Heart right ventricle (tissue), 16 donors: ENCODE measurements at regions of chr1 and their contacts with region 1.

Region 1: DNA sequence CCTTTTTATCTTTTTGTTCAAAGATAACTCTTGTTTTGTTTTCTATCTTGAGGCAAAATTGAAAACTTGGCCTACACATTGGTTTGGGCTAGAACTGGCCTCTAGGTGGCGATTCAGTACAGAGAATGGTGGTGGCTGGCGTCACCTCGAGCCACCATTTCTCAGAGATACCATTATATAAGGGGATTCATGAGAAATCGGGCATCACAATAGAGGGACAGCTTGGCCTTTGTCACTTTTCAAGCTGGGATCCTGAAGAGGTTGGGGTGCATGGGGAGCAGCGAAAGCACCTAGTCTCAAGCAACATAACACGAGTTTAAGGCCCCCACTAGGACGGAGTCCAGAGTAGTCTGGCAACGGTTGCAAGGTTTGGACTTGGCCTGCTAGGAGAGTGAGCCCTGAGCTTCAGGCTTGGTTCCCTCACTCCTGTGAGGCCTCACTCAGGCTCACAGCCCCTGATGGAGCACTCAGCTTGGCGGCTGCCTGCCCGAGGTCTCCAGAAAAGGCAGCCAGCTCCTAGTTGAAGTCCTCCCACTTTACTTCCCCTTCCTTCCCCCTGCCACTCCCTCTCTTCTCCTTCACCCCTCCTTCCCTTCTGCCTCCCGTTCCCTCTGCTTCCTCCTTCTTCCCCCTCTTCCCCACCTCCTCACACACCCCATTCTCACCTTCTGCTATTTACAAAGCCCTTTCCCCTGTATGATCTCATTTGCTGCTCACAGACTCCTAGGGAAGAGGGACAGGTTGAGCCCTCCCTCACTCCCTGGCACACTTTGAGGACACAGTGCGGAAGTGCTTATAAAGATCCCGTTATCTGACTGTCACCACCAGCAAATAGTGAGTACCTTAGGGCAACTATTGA is 67.8 kb downstream of the LRIG2 start:
- DNase-seq: peak; percentile 32 to 66
- ATAC-seq: peak; percentile 77 to 92 (median 90)
- H3K4me3 ChIP-seq: peak overlapping the region in 4 of 10 donors; percentile 2 to 24 (median 12)
- H3K27ac ChIP-seq: peak overlapping the region in 6 of 10 donors; percentile 6 to 68 (median 54)
- H3K4me1 ChIP-seq: peaks cover 7 to 37% (median 30%) of the 10 kb centered on the region in 9 donors
- H3K27me3 ChIP-seq: no peaks in the 10 kb centered on the region
- CTCF ChIP-seq: peak; percentile 68 to 91 (median 84)

Region 2: GRCh38 chr1:113389953-113390834 is 249.4 kb after region 1 on chr1 and contains the start of gene MAGI3:
- intact Hi-C with region 1: loop called in 6 of 10 experiments (anchors 5 to 10 kb)
- DNase-seq: peak; percentile 98
- ATAC-seq: peak; percentile 97 to 99 (median 97)
- H3K4me3 ChIP-seq: peak within 1 kb of the TSS; percentile 90 to 99 (median 94)
- H3K27ac ChIP-seq: peak within 1 kb of the TSS; percentile 84 to 95 (median 92)
- H3K4me1 ChIP-seq: peaks cover 0 to 47% (median 39%) of the 10 kb centered on the region in 9 donors
- H3K27me3 ChIP-seq: peaks cover 0 to 39% (median 0%) of the 10 kb centered on the region in 7 donors
- CTCF ChIP-seq: peak in 2 of 9 donors; percentile 4 to 9
- total RNA-seq, gene MAGI3: 4.3 to 9.4 (median 8.2) TPM